ENCODE measurements at regions of chr16 and their contacts with region 1.

Region 1: GRCh38 chr16:11715246-11715947 is 27.3 kb downstream of the TXNDC11 start:
- DNase-seq: no peak
- ATAC-seq: no peak
- H3K4me3 ChIP-seq: no peak overlapping the region
- H3K27ac ChIP-seq: peak overlapping the region; percentile 44
- H3K4me1 ChIP-seq: peaks cover 42% of the 10 kb centered on the region
- H3K27me3 ChIP-seq: no peaks in the 10 kb centered on the region
- CTCF ChIP-seq: no peak

Region 2: DNA sequence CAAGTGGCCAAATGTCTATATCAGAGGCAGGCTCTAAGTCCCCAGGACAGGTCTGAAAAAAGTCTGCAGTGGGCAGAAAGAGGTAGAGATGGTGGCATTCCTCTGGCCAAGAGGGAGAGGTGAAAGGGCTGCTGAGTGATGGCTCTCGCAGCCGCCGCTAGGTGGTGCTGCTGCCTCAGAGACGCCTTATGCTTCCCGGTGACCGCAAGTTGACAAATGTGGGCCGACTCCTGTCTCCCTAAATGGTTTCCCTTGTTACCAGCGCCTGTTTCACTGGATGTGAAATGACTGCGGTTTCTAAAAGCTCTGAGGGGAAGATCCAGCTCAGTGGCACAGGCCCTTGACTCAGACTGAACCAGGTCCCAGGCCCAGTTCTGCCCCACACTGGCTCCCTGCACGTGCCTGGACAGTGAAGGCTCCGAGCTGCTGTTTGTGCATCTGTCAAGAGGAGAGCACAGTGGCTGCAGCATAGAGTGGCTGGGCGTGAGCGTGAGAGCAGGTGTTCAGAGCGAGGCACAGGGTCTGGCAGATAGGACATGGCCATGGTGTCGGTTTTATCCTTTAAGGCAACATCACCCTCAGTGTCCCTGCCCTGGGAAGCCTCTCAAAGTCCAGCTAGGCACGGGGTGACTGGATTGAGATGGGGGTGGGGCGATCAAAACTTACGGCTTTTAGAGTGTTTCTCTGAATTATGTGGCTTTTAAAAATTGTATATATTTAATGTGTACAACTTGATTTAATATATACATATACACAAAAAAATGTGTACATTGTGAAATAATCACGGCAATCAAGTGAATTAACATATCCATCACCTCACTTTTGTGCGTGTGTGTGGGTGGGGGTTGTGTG is 751.1 kb before region 1 on chr16:
- intact Hi-C with region 1: loop called in 1 of 2 experiments (anchors 10 kb)
- DNase-seq: peak; percentile 86 to 92
- ATAC-seq: peak; percentile 84 to 91 (median 88)
- H3K4me3 ChIP-seq: no peak overlapping the region
- H3K27ac ChIP-seq: peak overlapping the region; percentile 68
- H3K4me1 ChIP-seq: peaks cover 18% of the 10 kb centered on the region
- H3K27me3 ChIP-seq: no peaks in the 10 kb centered on the region
- CTCF ChIP-seq: peak; percentile 98

Region 3: GRCh38 chr16:11535471-11535870 is 179.9 kb before region 1 on chr16:
- intact Hi-C with region 1: loop called (anchors 1 to 5 kb)
- DNase-seq: no peak
- ATAC-seq: no peak
- H3K4me3 ChIP-seq: no peak overlapping the region
- H3K27ac ChIP-seq: no peak overlapping the region
- H3K4me1 ChIP-seq: no peaks in the 10 kb centered on the region
- H3K27me3 ChIP-seq: no peaks in the 10 kb centered on the region
- CTCF ChIP-seq: no peak

Region 4: GRCh38 chr16:11675561-11676511 is 39.6 kb before region 1 on chr16:
- intact Hi-C with region 1: loop called in 1 of 2 experiments (anchors 5 kb)
- DNase-seq: peak; percentile 89 to 97
- ATAC-seq: peak; percentile 78 to 81 (median 80)
- H3K4me3 ChIP-seq: peak overlapping the region; percentile 23
- H3K27ac ChIP-seq: peak overlapping the region; percentile 91
- H3K4me1 ChIP-seq: peaks cover 96% of the 10 kb centered on the region
- H3K27me3 ChIP-seq: no peaks in the 10 kb centered on the region
- CTCF ChIP-seq: no peak

Region 5: DNA sequence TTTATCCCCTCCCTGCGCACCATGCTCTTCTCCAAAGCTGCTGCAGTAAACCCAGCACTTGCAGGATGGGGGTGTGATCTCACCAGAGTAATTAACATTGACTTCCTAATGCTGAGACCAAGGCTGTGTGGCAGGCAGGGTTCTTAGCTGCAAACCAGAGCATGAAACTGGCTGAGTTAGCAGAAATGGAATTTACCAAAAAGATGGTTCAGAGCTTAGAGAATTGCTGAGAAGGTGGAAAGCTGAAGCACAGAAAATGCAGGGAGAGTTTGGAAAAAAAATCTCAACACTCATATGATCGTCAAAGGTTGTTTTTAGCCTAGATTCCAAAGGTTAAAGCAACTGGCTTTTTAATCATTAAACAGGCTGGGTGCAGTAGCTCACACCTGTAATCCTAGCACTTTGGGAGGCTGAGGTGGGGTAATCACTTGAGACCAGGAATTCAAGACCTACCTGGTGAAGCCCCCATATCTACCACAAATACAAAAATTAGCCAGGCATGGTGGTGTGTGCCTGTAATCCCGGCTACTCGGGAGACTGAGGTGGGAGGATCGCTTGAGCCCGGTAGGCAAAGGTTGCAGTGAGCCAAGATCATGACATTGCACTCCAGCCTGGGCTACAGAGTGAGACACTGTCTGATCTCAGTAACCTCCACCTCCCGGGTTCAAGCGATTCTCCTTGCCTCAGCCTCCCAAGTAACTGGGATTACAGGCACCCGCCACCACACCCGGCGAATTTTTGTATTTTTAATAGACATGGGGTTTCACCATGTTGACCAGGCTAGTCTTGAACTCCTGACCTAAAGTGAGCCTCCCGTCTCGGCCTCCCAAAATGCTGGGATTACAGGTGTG is 33.2 kb after region 1 on chr16:
- intact Hi-C with region 1: no loop called
- DNase-seq: no peak
- ATAC-seq: no peak
- H3K4me3 ChIP-seq: no peak overlapping the region
- H3K27ac ChIP-seq: no peak overlapping the region
- H3K4me1 ChIP-seq: peaks cover 1% of the 10 kb centered on the region
- H3K27me3 ChIP-seq: no peaks in the 10 kb centered on the region
- CTCF ChIP-seq: no peak

Region 6: GRCh38 chr16:11851294-11852091 is 136.1 kb after region 1 on chr16 and contains the start of gene RSL1D1:
- intact Hi-C with region 1: no loop called
- DNase-seq: peak; percentile 90 to 96
- ATAC-seq: peak; percentile 97 to 98 (median 98)
- H3K4me3 ChIP-seq: peak within 1 kb of the TSS; percentile 99
- H3K27ac ChIP-seq: peak within 1 kb of the TSS; percentile 97
- H3K4me1 ChIP-seq: peaks cover 22% of the 10 kb centered on the region
- H3K27me3 ChIP-seq: no peaks in the 10 kb centered on the region
- CTCF ChIP-seq: no peak
- total RNA-seq, gene RSL1D1: 197 to 271 (median 256) TPM